Panc1 (cell line): ENCODE measurements at regions of chr1 and their contacts with region 1.

Region 1: DNA sequence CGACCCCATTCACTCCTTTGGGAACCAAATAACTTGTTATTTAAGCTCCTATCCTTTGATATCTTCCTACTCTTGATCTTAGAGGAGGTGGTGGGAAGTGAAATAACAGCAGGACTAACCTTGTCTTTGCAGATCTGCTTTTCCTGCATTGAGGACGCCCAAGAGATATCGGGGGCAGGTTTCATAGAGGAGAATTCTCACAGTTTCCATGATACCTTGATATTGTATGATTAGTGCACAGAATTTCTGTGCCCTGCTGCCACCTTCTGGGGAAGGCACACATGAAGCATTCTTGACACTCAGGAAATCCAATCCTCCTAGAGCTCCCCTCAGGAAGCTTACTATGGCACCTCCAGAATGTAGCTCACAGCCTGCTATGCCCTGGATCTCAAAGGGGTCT is 1.6 kb downstream of the CD1B start:
- DNase-seq: no peak
- ATAC-seq: no peak; the same call in 1 of the 2 replicates
- H3K4me3 ChIP-seq: no peak overlapping the region
- H3K27ac ChIP-seq: no peak overlapping the region
- H3K4me1 ChIP-seq: no peaks in the 10 kb centered on the region
- H3K27me3 ChIP-seq: no peaks in the 10 kb centered on the region
- CTCF ChIP-seq: peak; percentile 53

Region 2: GRCh38 chr1:158203693-158204457 is 125.9 kb before region 1 on chr1:
- CTCF ChIA-PET with region 1: interaction called, 8 read pairs
- POLR2A ChIA-PET with region 1: no interaction called
- in situ Hi-C with region 1: no loop called
- intact Hi-C with region 1: loop called (anchors 10 kb)
- DNase-seq: peak; percentile 33
- ATAC-seq: peak; percentile 95
- H3K4me3 ChIP-seq: no peak overlapping the region
- H3K27ac ChIP-seq: no peak overlapping the region
- H3K4me1 ChIP-seq: no peaks in the 10 kb centered on the region; the same call in 1 of the 2 replicates
- H3K27me3 ChIP-seq: no peaks in the 10 kb centered on the region; the same call in 1 of the 2 replicates
- CTCF ChIP-seq: peak; percentile 78